ENCODE measurements at regions of chr15 and their contacts with region 1.

Region 1: DNA sequence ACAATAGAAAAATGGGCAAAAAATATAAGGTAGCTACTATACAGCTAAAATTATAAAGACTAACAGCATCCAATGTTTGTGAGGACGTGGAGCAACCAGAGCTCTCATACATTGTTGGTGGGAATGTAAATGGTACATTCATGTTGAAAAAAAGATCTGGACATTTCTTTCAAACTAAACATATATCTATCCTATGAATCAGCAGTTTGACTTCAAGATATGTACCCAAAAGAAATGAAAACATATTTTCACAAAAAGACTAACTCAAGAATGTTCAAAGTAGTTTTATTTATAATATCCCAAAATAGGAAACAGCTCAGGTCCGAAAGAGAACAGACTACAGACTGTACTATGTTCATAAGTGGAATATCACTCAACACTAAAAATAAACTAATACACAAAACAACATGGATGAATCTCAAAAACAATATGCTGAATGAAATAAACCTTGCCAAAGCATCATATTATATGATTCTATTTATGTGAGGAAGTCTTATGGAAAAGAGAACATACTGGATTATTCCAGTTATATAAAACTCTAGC is 8.8 kb upstream of the TTBK2 start:
- DNase-seq: no peak
- ATAC-seq: no peak
- H3K4me3 ChIP-seq: no peak overlapping the region
- H3K27ac ChIP-seq: no peak overlapping the region
- H3K4me1 ChIP-seq: no peaks in the 10 kb centered on the region
- H3K27me3 ChIP-seq: no peaks in the 10 kb centered on the region
- CTCF ChIP-seq: no peak
- POLR2A ChIP-seq: no peak
- RAD21 ChIP-seq: no peak

Region 2: GRCh38 chr15:42796955-42797779 is 132.2 kb before region 1 on chr15:
- CTCF ChIA-PET with region 1: no interaction called
- POLR2A ChIA-PET with region 1: no interaction called
- RAD21 ChIA-PET with region 1: interaction called in 1 of 2 experiments, 3 read pairs
- intact Hi-C with region 1: loop called (anchors 5 kb)
- DNase-seq: no peak
- ATAC-seq: 0 out of 2 replicates have a peak, but pooled peaks have one; percentile 20
- H3K4me3 ChIP-seq: no peak overlapping the region
- H3K27ac ChIP-seq: no peak overlapping the region
- H3K4me1 ChIP-seq: no peaks in the 10 kb centered on the region
- H3K27me3 ChIP-seq: no peaks in the 10 kb centered on the region
- CTCF ChIP-seq: peak in 2 of 3 experiments; percentile 28 to 31; a peak in 2 of 6 replicates
- POLR2A ChIP-seq: no peak
- RAD21 ChIP-seq: peak; percentile 60

Measured in HCT116 (cell line).